IMR-90 (cell line): ENCODE measurements at regions of chr17 and their contacts with region 1.

Region 1: DNA sequence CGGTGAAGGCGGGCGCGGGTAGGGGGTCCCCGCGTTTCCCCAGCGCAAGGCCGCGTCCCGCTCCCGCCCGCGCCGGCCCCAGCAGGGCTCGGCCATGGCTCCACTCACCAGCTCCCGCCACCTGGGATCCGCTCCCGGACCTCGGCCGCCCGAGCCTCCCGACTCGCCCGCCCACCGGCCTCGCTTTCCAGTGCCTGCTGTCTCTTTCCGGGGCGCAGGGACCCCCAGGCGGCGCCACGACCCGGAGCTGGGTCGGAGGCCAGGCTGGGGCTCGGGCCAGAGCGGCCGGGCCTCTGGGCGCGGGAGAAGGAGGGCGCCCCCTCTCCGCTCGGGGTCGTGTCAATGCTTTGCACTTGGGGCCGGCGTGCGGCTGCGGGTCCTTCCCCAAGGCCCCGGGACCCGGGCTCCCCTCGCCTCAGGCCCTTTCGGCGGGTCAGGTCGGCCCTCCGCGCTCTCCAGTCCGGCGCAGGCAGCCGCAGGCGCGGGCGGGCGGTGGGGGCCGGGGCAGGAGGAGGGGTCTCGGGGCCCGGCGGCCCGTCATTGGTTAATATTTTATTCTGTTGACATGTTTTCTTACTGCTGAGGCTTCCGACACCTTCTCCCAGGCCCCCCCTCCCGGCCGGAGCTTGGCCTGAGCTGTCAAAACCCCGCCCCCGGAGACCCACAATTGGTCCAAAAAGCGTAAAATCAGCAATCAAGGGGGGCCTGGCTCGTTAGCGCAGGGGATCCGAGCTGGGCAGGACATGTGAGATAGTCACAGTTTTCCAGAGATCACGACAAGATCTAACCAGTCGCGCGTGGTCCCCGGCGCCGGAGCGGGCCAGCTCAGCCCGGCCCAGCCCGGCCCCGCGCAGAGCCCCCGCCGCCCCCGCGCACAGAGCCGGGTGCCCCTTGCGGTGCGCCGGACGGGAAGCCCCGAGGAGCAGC is at the start of gene TBX2:
- DNase-seq: peak; percentile 96
- ATAC-seq: peak; percentile 56
- H3K4me3 ChIP-seq: peak within 1 kb of the TSS; percentile 98
- H3K27ac ChIP-seq: peak within 1 kb of the TSS; percentile 100
- H3K4me1 ChIP-seq: peaks cover 16% of the 10 kb centered on the region
- H3K27me3 ChIP-seq: no peaks in the 10 kb centered on the region
- CTCF ChIP-seq: no peak
- POLR2A ChIP-seq: peak; percentile 85
- RAD21 ChIP-seq: no peak; the same call in 1 of the 2 replicates
- total RNA-seq, gene TBX2: 20.1 and 23.6 TPM in 2 replicates

Region 2: DNA sequence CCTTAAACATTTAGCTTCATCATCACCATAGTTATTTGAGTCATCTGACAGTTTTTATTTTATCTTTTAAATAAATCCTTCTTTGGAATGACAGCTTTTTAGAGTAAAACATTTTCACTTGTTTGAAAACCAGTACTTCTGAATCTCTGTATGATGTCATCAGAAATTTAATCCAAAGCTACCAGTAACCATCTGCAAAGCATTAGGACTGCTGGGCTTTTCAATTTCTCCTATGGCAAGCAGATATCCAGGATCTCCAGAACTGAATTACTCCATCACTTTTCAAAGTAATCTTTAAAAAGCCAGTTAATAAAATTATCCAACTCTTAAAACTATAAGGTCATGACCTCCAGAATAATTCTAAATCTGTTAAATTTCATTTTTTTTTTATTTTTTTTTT is 925.6 kb before region 1 on chr17:
- CTCF ChIA-PET with region 1: no interaction called
- POLR2A ChIA-PET with region 1: no interaction called
- dilution Hi-C with region 1: no loop called
- in situ Hi-C with region 1: no loop called
- intact Hi-C with region 1: no loop called
- DNase-seq: peak; percentile 64
- ATAC-seq: no peak
- H3K4me3 ChIP-seq: no peak overlapping the region
- H3K27ac ChIP-seq: no peak overlapping the region
- H3K4me1 ChIP-seq: peaks cover 5% of the 10 kb centered on the region
- H3K27me3 ChIP-seq: no peaks in the 10 kb centered on the region
- CTCF ChIP-seq: no peak
- POLR2A ChIP-seq: no peak
- RAD21 ChIP-seq: no peak

Region 3: DNA sequence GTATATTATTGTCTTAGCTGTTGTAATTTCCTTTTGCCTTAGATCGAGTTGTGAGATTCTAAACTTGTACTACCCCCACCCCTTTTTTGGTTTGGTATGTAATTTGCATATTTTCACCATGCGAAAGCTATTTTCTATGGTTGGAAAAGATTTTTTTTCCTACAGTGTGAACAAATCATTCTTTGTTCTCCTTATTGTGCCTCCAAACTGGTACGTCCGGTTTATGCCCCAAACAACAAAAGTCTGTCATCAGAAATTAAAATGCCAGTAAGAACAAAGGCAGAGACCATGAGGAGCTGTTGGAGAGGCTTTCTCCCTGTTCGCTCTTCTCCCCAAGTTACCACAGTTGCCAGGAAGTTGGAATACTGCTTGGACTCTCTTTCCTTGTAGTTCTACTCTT is 655.6 kb before region 1 on chr17:
- CTCF ChIA-PET with region 1: no interaction called
- POLR2A ChIA-PET with region 1: interaction called, 3 read pairs
- dilution Hi-C with region 1: no loop called
- in situ Hi-C with region 1: no loop called
- intact Hi-C with region 1: loop called (anchors 1 kb)
- DNase-seq: peak; percentile 43
- ATAC-seq: peak; percentile 79
- H3K4me3 ChIP-seq: peak overlapping the region; percentile 44; the same call in 1 of the 2 replicates
- H3K27ac ChIP-seq: peak overlapping the region; percentile 96
- H3K4me1 ChIP-seq: 0 out of 2 replicates have a peak, but pooled peaks cover 2% of the 10 kb centered on the region
- H3K27me3 ChIP-seq: no peaks in the 10 kb centered on the region
- CTCF ChIP-seq: no peak
- POLR2A ChIP-seq: 0 out of 2 replicates have a peak, but pooled peaks have one; percentile 39
- RAD21 ChIP-seq: no peak

Region 4: DNA sequence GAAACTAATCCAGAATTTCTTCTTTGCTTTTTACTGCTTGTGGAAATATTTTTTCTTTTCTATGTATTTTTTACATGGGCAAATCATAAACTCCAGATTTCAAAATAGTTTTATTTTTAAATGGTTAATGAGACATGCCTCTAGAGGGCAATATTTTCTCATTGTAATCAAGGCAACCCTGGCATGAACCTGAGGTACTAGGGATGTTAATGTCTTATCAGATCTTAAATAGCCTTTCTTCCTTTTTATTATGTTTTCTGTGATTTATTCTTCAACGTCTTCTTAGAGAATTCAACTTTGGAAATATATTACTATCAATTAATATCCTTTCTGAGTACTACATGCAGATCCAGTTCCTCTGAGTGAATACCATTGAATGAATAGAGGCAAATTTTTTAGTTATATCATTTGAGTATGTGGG is 397.1 kb before region 1 on chr17:
- CTCF ChIA-PET with region 1: interaction called, 10 read pairs
- POLR2A ChIA-PET with region 1: no interaction called
- dilution Hi-C with region 1: no loop called
- in situ Hi-C with region 1: loop called (anchors 5 kb)
- intact Hi-C with region 1: loop called (anchors 1 kb)
- DNase-seq: peak; percentile 79
- ATAC-seq: peak; percentile 75
- H3K4me3 ChIP-seq: no peak overlapping the region
- H3K27ac ChIP-seq: no peak overlapping the region
- H3K4me1 ChIP-seq: no peaks in the 10 kb centered on the region
- H3K27me3 ChIP-seq: no peaks in the 10 kb centered on the region
- CTCF ChIP-seq: peak; percentile 71
- POLR2A ChIP-seq: no peak
- RAD21 ChIP-seq: peak; percentile 84

Region 5: DNA sequence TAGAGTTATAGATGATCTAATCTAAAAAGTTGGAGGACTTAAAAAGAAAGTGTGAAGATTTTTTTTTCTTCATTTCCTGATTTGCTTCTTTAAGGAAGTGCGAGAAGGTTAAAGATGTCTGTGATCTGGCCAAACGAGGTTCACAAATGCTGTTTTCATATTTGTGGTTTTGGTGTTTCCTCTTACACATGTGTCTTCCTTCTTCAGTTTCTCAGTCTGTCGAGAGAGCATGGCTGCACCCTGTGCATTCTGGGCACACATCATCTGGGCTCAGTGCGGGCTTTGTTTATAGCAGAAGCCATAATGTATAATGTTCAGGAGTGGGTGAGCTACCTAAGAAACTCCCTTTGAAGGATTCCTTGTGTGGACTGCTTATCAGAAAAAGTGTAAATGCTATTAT is 260.2 kb before region 1 on chr17:
- CTCF ChIA-PET with region 1: no interaction called
- POLR2A ChIA-PET with region 1: no interaction called
- dilution Hi-C with region 1: no loop called
- in situ Hi-C with region 1: no loop called
- intact Hi-C with region 1: loop called (anchors 5 kb)
- DNase-seq: peak; percentile 88
- ATAC-seq: peak; percentile 98
- H3K4me3 ChIP-seq: no peak overlapping the region
- H3K27ac ChIP-seq: no peak overlapping the region
- H3K4me1 ChIP-seq: no peaks in the 10 kb centered on the region
- H3K27me3 ChIP-seq: no peaks in the 10 kb centered on the region
- CTCF ChIP-seq: no peak
- POLR2A ChIP-seq: no peak
- RAD21 ChIP-seq: 0 out of 2 replicates have a peak, but pooled peaks have one; percentile 6

Region 6: DNA sequence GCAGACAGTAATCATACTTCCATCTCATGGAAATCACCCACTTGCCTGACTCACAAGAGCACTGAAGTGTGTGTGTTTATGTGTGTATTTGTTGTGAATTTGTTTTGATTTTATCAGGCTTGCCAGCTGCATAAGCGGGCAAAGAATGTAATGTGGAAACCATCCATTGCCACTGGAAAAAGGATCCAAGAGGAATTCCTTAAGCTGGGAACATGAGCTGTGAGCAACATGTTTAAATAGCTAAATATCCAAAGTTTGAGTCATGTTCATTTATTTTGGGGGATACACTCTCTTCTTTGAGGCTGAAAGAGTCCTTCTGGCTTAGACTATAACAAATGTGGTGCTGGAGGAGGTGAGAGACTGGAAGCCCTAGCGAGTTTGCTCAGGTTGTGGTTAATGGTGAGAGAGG is 198.2 kb before region 1 on chr17:
- CTCF ChIA-PET with region 1: no interaction called
- POLR2A ChIA-PET with region 1: interaction called, 7 read pairs
- dilution Hi-C with region 1: no loop called
- in situ Hi-C with region 1: loop called (anchors 5 kb)
- intact Hi-C with region 1: loop called (anchors 2 kb)
- DNase-seq: peak; percentile 99
- ATAC-seq: peak; percentile 84
- H3K4me3 ChIP-seq: peak overlapping the region; percentile 17; the same call in 1 of the 2 replicates
- H3K27ac ChIP-seq: peak overlapping the region; percentile 84
- H3K4me1 ChIP-seq: peaks cover 14% of the 10 kb centered on the region
- H3K27me3 ChIP-seq: no peaks in the 10 kb centered on the region
- CTCF ChIP-seq: no peak
- POLR2A ChIP-seq: no peak
- RAD21 ChIP-seq: peak; percentile 21; the same call in 1 of the 2 replicates

Region 7: DNA sequence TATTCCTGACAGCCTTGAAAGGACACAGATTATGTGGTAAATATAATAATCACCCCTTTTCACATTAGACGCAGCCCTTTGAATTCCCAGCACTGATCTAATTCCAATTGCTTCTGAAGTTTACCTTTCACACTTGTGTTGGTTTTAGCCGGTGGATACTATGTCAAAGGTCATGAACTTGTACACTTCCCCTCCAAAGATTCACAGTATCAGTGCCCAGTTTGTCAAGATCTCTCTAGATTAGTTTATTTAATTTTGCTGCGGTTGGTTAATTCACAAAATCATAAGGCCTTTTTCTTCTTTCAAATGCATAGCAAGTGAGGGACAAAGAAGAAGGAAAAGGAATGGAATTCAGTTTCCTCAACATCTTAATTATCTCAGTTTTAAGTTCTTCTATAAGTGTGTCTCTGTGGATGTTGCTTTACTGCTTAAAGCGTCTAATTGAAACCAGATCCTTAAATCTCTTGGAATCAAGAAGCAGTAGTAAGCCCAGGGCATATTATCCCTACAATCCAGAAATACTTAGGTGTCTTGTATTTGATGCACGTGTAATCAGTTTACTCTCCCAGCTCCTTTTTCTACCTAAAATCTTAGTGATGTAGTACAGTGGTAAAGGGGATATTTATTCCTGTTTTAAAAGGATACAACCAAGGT is 174.0 kb before region 1 on chr17:
- CTCF ChIA-PET with region 1: no interaction called
- POLR2A ChIA-PET with region 1: no interaction called
- dilution Hi-C with region 1: no loop called
- in situ Hi-C with region 1: no loop called
- intact Hi-C with region 1: no loop called
- DNase-seq: no peak
- ATAC-seq: no peak
- H3K4me3 ChIP-seq: no peak overlapping the region
- H3K27ac ChIP-seq: no peak overlapping the region
- H3K4me1 ChIP-seq: peaks cover 10% of the 10 kb centered on the region; the same call in 1 of the 2 replicates
- H3K27me3 ChIP-seq: no peaks in the 10 kb centered on the region
- CTCF ChIP-seq: no peak
- POLR2A ChIP-seq: no peak
- RAD21 ChIP-seq: no peak

Region 8: DNA sequence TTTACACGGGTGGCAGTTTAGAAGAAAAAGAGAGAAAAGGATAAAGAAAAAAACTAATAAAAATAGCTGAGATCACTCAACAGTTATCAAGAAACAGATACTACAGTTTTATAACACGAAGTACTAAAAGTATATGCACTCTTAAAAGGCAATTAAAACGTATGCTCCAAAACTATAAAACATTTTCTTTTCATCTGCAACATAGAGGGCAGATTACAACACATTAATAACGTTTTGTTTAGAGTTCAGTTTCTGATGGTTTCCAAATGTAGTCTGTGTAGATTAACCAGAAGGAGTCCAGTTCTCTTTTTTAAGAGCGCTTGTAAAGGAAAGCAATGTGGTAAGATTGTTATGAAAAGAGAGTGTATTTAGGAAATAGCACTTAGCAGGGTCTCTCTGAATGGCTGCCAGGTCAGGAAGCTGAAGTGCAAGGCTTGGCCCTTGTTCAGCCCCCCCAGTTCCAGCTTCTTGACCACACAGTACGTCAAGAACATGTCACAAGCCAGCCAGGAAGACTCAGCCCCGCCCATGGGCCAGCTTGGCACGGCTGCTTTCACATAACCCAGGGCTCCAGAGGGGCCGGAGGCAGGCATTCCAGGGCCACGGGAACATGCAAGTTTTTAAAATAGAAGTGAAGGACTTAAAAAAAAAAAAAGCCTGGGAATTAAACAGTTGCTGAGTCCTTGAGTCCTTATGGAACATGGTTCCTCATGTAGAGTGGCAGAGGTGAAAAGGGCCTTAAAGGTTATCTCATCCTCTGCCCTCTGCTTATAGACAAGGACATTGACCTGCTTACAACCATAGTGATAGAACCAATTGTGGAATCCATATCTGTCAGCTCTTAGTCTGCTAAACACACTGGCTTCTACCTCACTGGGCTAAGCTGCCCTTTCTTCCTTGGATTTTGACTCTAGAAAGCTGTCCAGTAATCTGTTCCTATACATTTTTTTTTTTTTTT is 147.2 kb before region 1 on chr17:
- CTCF ChIA-PET with region 1: no interaction called
- POLR2A ChIA-PET with region 1: interaction called, 3 read pairs
- dilution Hi-C with region 1: no loop called
- in situ Hi-C with region 1: no loop called
- intact Hi-C with region 1: loop called (anchors 5 kb)
- DNase-seq: peak; percentile 99
- ATAC-seq: peak; percentile 83
- H3K4me3 ChIP-seq: no peak overlapping the region
- H3K27ac ChIP-seq: peak overlapping the region; percentile 80
- H3K4me1 ChIP-seq: peaks cover 18% of the 10 kb centered on the region
- H3K27me3 ChIP-seq: no peaks in the 10 kb centered on the region
- CTCF ChIP-seq: no peak
- POLR2A ChIP-seq: peak; percentile 52; the same call in 1 of the 2 replicates
- RAD21 ChIP-seq: peak; percentile 12; the same call in 1 of the 2 replicates

Region 9: GRCh38 chr17:61412143-61412859 is 12.9 kb after region 1 on chr17:
- CTCF ChIA-PET with region 1: interaction called, 4 read pairs
- POLR2A ChIA-PET with region 1: interaction called, 10 read pairs
- dilution Hi-C with region 1: no loop called
- in situ Hi-C with region 1: no loop called
- intact Hi-C with region 1: no loop called
- DNase-seq: peak; percentile 75
- ATAC-seq: peak; percentile 44
- H3K4me3 ChIP-seq: peak overlapping the region; percentile 66
- H3K27ac ChIP-seq: peak overlapping the region; percentile 91
- H3K4me1 ChIP-seq: peaks cover 40% of the 10 kb centered on the region
- H3K27me3 ChIP-seq: no peaks in the 10 kb centered on the region
- CTCF ChIP-seq: peak; percentile 98
- POLR2A ChIP-seq: peak; percentile 63
- RAD21 ChIP-seq: peak; percentile 98